ENCODE measurements at regions of chr10 and their contacts with region 1.

Region 1: DNA sequence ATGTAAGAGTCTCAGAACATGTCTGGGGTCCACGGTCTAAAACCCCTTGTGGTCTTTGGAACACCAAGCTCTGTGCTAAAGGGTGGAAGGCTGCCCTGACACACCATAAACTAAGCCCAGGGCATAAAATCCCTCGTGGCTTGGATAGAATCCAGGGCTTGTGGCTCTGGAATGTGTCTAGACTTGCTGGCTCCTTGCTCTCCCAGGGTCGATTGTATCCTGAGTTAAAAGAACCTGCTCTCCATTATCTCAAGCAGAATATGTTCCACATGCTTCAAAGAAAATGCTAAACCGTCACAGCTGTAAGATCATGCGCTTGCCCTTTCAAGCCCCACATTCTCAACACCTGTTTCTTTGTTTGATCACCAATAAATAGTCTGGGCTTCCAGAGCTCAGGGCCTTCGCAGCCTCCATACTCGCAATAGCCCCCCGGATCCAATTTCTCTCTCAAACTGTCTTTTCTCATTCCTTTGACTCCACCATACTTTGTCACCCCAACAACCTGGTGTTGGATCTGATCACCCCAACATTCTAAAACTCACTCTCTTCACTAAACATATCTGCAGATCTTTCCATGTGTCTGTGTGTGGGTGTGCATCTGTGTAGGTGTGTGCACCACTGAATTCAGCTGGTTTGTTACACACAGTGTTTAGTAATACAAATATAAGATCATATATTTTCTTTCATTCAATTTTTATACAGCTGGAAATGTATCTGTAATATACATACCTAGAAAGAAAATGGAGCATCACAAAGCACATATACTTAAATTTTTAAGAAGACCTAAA is 238.5 kb downstream of the ZMYND11 start:
- DNase-seq: peak; percentile 80
- ATAC-seq: peak; percentile 64
- H3K4me3 ChIP-seq: peak overlapping the region in 1 of 3 experiments; percentile 1; a peak in 2 of 6 replicates
- H3K27ac ChIP-seq: peak overlapping the region; percentile 68
- H3K4me1 ChIP-seq: peaks cover 25% of the 10 kb centered on the region
- H3K27me3 ChIP-seq: no peaks in the 10 kb centered on the region
- CTCF ChIP-seq: no peak
- EP300 ChIP-seq: peak in 1 of 2 experiments; percentile 6; a peak in 1 of 4 replicates
- POLR2A ChIP-seq: no peak
- RAD21 ChIP-seq: no peak

Region 2: GRCh38 chr10:1594372-1595241 is 1220.9 kb after region 1 on chr10:
- CTCF ChIA-PET with region 1: no interaction called
- POLR2A ChIA-PET with region 1: no interaction called
- in situ Hi-C with region 1: no loop called
- intact Hi-C with region 1: loop called (anchors 5 kb)
- DNase-seq: no peak
- ATAC-seq: no peak
- H3K4me3 ChIP-seq: no peak overlapping the region
- H3K27ac ChIP-seq: no peak overlapping the region
- H3K4me1 ChIP-seq: no peaks in the 10 kb centered on the region
- H3K27me3 ChIP-seq: peaks cover 5 to 21% of the 10 kb centered on the region in 2 experiments; a peak in 4 of 5 replicates
- CTCF ChIP-seq: no peak
- EP300 ChIP-seq: no peak
- POLR2A ChIP-seq: no peak
- RAD21 ChIP-seq: no peak